A673 (cell line): ENCODE measurements at regions of chr11 and their contacts with region 1.

Region 1: GRCh38 chr11:81026032-81026431 is 1585.2 kb upstream of the TENM4 start:
- DNase-seq: peak; percentile 39
- H3K4me3 ChIP-seq: no peak overlapping the region
- H3K27ac ChIP-seq: no peak overlapping the region
- H3K4me1 ChIP-seq: peaks cover 52% of the 10 kb centered on the region
- H3K27me3 ChIP-seq: no peaks in the 10 kb centered on the region
- CTCF ChIP-seq: no peak

Region 2: DNA sequence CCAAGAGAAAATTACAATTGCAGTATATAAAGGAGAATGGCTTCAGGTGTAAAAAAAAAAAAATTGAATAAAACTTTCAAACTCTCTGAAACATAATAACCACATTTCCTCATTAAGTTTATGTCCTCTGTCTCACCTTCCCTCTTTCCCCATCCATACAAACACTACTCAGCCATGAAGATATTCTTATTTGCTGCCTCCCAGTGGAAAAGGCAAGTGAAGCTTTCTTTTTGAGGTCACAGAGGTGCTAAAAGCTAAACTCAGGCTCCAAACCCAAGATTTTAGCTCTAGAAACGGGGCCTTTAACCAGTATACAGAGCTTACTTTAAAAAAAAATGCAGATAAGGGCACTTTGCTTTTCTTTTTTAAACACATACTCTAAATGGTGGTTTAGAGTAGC is 139.1 kb after region 1 on chr11:
- CTCF ChIA-PET with region 1: no interaction called
- POLR2A ChIA-PET with region 1: no interaction called
- intact Hi-C with region 1: loop called (anchors 10 kb)
- DNase-seq: peak; percentile 61
- H3K4me3 ChIP-seq: no peak overlapping the region
- H3K27ac ChIP-seq: no peak overlapping the region
- H3K4me1 ChIP-seq: peaks cover 9% of the 10 kb centered on the region
- H3K27me3 ChIP-seq: no peaks in the 10 kb centered on the region
- CTCF ChIP-seq: peak; percentile 59